Mammary epithelial cell (primary cell): ENCODE measurements at regions of chr5 and their contacts with region 1.

Region 1: DNA sequence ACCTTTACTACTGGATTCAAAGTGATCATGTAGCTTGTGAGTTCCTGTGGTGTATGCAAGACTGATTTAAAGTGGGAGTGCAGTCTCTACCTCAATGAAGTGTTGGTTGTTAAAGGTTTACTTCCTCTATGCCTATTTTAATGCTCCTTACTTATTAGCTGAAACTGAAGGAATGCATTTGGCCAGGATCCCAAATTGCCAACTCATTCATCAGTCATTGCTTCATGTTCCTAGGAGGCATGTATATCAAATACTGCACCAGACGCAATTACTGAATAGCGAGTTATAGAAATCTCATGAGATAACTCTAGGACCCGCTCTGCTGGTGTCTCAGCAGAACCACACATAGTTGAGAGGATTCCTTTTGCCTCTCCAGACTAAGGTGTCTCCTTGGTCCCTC is 143.0 kb upstream of the RPS23 start:
- DNase-seq: peak; percentile 94
- H3K4me3 ChIP-seq: no peak overlapping the region
- H3K27ac ChIP-seq: peak overlapping the region; percentile 37
- H3K4me1 ChIP-seq: peaks cover 22% of the 10 kb centered on the region
- H3K27me3 ChIP-seq: no peaks in the 10 kb centered on the region
- CTCF ChIP-seq: peak; percentile 15 to 63

Region 2: DNA sequence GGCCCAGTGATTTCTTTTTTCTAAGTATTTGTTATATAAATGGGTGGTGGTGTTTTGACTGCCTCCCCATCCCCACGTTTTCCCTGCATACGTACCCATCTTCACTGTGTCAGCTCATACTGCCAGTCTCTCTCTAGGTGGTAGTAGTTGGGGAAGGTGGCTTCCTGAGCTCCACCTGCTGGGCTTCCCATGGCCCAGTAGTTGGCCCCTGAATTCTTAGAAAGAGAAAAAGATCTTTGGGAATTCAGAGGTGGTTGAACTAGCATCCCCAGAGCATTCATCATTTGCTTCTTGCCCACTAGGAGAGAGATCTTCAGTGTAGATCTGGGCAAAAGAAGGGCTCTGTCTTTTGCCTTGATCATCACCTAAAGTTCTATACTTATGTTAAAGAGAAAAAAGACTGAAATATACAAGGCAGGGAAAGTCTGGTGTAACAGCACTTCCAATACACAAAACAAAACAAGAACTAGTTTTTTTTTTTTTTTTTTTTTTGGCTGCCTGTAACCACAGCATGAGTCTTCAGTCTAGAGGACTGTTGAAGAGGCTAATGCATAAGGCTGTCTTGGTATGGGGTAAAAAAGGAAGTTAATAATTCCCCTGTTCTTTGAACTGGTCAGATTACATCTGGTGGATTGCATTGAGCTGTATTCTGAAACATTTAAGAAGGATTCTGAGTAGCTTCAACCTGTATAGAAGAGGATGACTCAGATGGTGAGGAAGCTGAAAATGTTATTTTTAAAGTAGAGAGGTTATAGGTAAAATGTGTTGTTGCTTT is 320.6 kb before region 1 on chr5:
- CTCF ChIA-PET with region 1: no interaction called
- dilution Hi-C with region 1: no loop called
- in situ Hi-C with region 1: no loop called
- intact Hi-C with region 1: no loop called
- DNase-seq: peak; percentile 37
- H3K4me3 ChIP-seq: no peak overlapping the region
- H3K27ac ChIP-seq: no peak overlapping the region
- H3K4me1 ChIP-seq: no peaks in the 10 kb centered on the region
- H3K27me3 ChIP-seq: no peaks in the 10 kb centered on the region
- CTCF ChIP-seq: no peak

Region 3: GRCh38 chr5:82332886-82333615 is 88.1 kb before region 1 on chr5:
- CTCF ChIA-PET with region 1: no interaction called
- dilution Hi-C with region 1: no loop called
- in situ Hi-C with region 1: no loop called
- intact Hi-C with region 1: no loop called
- DNase-seq: no peak
- H3K4me3 ChIP-seq: no peak overlapping the region
- H3K27ac ChIP-seq: no peak overlapping the region
- H3K4me1 ChIP-seq: no peaks in the 10 kb centered on the region
- H3K27me3 ChIP-seq: no peaks in the 10 kb centered on the region
- CTCF ChIP-seq: no peak

Region 4: DNA sequence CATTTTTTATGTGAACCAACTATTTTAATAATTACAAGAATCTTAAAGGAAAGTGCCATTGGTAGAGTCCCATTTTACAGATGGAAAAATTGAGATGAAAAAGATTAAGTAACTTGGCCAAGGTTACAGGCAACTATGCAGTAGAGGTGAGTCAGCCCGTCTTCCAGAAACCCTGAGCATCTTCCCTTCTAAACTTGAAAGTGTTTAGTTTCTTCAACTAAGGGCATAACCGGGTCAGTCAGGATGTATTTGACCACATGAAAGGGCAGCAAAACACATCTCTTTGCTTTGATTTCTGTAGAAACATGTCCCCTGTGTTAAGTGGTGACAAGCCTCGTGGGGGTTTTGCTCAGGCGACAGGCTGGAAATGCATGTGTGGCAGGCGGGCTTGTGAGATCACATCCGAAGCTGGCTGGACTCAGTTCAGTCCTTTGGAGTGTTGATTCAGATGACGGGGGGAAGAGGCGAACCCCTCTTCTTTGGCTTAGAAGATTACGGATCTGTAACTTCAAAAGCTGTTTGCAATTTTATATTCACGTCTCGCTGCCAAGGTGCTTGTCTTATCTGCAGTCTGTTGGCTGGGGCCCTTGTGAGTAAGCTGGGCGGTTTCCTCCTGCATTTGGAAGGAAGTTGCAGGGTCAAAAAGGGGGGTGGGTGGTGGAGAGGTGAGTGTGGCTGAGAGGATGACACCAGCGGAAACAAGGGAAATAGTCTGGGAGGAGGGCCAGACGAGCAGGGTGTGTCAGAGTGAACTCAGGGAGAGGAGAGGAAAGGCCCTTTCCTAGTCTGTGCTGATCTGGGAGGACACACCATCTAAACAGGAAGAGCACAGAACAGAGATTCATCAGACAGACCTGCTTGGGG is 64.1 kb before region 1 on chr5:
- CTCF ChIA-PET with region 1: interaction called, 3 read pairs
- dilution Hi-C with region 1: no loop called
- in situ Hi-C with region 1: no loop called
- intact Hi-C with region 1: loop called (anchors 2 kb)
- DNase-seq: peak; percentile 99
- H3K4me3 ChIP-seq: no peak overlapping the region
- H3K27ac ChIP-seq: peak overlapping the region; percentile 73
- H3K4me1 ChIP-seq: peaks cover 11% of the 10 kb centered on the region
- H3K27me3 ChIP-seq: no peaks in the 10 kb centered on the region
- CTCF ChIP-seq: no peak

Region 5: GRCh38 chr5:82406205-82406773 is 14.8 kb before region 1 on chr5:
- CTCF ChIA-PET with region 1: no interaction called
- dilution Hi-C with region 1: no loop called
- in situ Hi-C with region 1: no loop called
- intact Hi-C with region 1: loop called (anchors 1 kb)
- DNase-seq: peak; percentile 100
- H3K4me3 ChIP-seq: peak overlapping the region in 2 of 3 experiments; percentile 22 to 45
- H3K27ac ChIP-seq: peak overlapping the region; percentile 100
- H3K4me1 ChIP-seq: peaks cover 25% of the 10 kb centered on the region
- H3K27me3 ChIP-seq: no peaks in the 10 kb centered on the region
- CTCF ChIP-seq: no peak